ENCODE measurements at regions of chr2 and their contacts with region 1.

Region 1: DNA sequence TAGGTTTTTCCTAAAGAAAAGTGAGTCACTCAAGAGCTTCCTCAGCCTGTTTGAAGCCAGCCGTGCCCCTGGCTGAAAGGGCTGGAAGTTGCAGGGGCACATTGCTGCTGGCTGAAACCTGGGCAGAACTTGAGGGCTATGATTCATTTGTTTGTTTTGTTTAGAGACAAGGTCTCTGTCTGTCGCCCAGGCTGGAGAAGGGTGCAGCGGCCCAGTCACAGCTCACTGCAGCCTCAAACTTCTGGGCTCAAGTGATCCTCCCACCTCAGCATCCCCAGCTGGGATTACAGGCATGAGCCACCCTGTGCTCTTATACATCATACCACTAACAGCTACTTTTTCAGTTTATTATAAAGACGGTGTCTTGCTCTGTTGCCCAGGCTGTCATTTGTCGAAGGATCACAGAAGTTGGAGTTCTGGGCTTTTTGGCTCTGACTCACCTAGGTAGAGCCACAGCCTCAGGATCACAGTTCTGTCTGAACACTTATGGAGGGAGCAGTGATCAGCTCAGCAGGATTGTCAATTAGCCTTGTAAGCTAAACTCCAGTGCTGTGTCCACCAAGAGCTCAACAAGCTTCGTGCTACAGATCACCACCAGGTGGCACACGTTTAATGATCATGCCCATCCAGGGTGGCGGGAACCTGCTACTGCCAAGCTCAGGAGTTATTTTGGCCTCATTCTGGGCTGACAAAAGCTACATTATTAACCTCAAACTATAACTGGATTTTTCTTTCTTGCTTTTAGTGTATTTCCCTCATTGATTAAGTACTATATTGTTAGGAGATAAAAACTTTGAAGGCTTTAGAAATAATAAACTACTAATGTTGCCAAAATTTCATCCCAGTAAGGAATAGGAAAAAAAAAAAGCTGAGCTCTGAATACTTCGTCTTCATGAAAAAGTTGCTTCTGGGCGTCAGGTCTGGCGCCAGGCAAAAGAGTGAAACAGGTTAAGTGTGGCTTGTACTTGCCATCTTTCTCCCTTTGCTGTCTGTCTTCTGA is 57.9 kb downstream of the ARHGEF33 start:
- DNase-seq: peak; percentile 87
- H3K4me3 ChIP-seq: no peak overlapping the region
- H3K27ac ChIP-seq: no peak overlapping the region
- H3K4me1 ChIP-seq: peaks cover 9% of the 10 kb centered on the region
- H3K27me3 ChIP-seq: no peaks in the 10 kb centered on the region
- CTCF ChIP-seq: peak; percentile 77 to 83

Region 2: DNA sequence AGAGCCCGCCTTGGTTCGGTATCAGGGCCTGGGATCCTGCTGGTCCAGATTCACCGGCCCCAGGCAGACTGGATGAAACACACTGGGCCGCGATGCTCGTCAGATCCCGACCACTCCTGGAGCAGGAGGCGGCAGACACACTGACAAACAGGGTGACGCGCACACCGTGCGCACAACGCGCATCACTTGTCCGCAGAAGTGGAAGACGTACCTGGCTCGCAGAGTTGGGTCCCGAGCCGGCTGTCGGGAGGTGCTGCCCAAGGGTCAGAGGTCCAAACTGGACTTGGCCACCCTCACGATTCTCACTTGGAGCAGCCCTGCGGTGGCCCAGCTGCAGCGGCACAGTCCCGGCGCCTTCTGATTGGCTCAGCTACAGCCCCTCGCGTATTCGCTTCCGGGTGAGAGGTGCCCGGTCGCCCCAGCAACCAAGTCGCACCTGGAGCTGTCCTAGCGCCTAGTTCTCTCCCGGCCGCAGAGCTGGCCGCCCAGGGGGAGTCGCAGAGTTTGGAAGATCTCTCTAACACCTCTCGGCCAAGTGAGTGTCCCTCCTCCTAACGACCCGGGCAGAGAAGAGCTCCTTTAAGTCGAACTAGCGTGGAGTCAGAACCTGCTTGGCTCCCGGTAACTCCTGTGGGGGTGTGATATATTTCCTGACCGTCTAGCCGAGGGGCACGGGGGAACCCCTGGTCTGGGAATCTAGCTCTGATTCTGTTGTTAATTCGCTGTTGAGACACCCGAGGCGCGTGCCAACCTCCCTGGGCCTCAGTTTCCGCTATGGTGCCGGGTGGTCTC is 71.8 kb before region 1 on chr2 and contains the starts of genes DHX57 and MORN2:
- CTCF ChIA-PET with region 1: no interaction called
- dilution Hi-C with region 1: no loop called
- in situ Hi-C with region 1: loop called in 1 of 2 experiments (anchors 5 kb)
- intact Hi-C with region 1: no loop called
- DNase-seq: peak; percentile 84
- H3K4me3 ChIP-seq: peak within 1 kb of the TSS; percentile 70 to 90 (median 78)
- H3K27ac ChIP-seq: peak within 1 kb of the TSS; percentile 82
- H3K4me1 ChIP-seq: peaks cover 11% of the 10 kb centered on the region
- H3K27me3 ChIP-seq: no peaks in the 10 kb centered on the region
- CTCF ChIP-seq: no peak
- total RNA-seq, gene DHX57: 21.7 to 30.8 TPM
- total RNA-seq, gene MORN2: 9.2 to 16.3 TPM

Region 3: DNA sequence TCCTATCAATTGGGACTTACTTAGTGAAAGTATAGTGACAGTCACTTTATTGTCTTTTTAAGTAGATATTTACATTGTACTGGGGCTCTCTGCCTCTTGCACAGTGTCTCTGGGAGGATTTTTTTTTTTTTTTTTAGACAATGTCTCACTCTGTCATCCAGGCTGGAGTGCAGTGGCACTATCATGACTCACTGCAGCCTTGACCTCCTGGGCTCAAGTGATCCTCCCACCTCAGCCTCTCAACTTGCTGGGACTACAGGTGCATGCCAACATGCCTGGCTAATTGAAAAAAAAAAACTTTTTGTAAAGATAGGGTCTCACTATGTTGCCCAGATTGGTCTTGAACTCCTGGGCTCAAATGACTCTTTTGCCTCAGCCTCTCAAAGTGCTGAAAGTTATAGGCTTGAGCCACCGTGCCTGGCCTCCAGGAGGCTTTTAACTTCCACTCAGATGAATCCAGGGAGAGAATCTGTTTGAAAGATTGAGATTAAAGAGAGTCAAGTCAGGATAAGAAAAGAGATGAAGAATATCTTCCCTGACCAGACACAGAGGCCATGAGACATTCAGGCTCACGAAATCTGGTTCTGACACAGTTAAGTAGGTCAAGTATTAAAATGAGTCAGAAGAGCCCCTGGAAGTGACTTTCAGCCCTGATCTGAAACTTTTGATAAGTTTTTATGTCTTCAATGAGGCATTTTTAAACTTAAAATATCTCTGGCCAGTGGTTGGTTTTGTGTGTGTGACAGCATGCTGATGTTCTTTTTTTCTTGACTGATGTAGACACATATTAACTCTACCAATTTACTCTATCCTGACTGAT is 39.6 kb before region 1 on chr2:
- CTCF ChIA-PET with region 1: no interaction called
- dilution Hi-C with region 1: no loop called
- in situ Hi-C with region 1: no loop called
- intact Hi-C with region 1: no loop called
- DNase-seq: peak; percentile 12
- H3K4me3 ChIP-seq: no peak overlapping the region
- H3K27ac ChIP-seq: no peak overlapping the region
- H3K4me1 ChIP-seq: peaks cover 22% of the 10 kb centered on the region
- H3K27me3 ChIP-seq: no peaks in the 10 kb centered on the region
- CTCF ChIP-seq: no peak

Region 4: DNA sequence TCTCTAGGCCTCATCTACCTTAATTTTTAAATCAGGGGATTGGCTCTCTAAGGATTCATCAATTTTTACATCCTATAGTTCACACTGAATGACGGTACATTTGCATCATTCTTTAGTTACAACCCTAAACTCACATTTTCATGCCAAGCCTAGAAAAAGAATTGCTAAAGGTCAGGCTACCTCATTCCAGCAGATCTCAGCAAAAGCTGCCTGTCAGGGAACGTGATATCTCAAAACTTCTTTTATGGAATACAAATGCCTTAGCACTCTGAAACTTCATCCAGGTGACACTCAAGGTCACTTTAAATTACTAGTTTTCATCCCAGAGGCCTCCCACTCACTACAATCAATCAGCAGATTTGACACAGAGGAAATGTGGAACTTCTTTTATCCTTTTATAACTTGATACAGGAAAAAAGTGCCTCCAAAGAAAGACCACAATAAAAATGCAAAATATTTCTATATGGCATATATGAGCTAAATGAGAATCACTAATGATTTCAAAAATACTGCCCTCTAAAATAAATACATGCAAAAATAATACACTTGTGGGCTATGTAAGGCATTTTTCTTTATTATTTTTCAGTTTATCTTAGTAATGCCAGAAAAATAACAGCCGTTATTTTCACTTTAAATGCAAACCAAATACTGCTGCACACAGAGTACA is 33.6 kb after region 1 on chr2:
- CTCF ChIA-PET with region 1: no interaction called
- dilution Hi-C with region 1: no loop called
- in situ Hi-C with region 1: no loop called
- intact Hi-C with region 1: no loop called
- DNase-seq: no peak
- H3K4me3 ChIP-seq: no peak overlapping the region
- H3K27ac ChIP-seq: no peak overlapping the region
- H3K4me1 ChIP-seq: no peaks in the 10 kb centered on the region
- H3K27me3 ChIP-seq: no peaks in the 10 kb centered on the region
- CTCF ChIP-seq: no peak

Region 5: DNA sequence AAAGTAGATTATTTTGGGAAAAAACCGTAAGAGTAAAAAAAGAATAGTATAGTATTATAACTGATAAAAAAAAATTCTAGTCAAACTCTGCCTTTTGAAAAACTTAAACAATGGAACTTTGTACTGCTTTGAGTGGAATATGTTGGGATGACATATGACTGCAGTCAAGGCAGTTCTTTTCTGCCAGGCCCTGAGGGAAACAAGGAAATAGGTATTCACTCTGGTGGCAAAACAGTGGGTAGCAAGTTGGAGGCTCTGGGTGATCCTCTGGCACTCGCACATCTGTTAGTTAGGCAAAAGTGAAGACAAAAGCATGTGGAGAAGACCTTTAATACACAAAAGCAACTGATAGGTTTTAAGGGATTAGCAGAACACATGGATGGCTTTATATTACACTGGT is 44.4 kb after region 1 on chr2:
- CTCF ChIA-PET with region 1: no interaction called
- dilution Hi-C with region 1: no loop called
- in situ Hi-C with region 1: no loop called
- intact Hi-C with region 1: no loop called
- DNase-seq: no peak
- H3K4me3 ChIP-seq: no peak overlapping the region
- H3K27ac ChIP-seq: no peak overlapping the region
- H3K4me1 ChIP-seq: no peaks in the 10 kb centered on the region
- H3K27me3 ChIP-seq: no peaks in the 10 kb centered on the region
- CTCF ChIP-seq: no peak

Region 6: DNA sequence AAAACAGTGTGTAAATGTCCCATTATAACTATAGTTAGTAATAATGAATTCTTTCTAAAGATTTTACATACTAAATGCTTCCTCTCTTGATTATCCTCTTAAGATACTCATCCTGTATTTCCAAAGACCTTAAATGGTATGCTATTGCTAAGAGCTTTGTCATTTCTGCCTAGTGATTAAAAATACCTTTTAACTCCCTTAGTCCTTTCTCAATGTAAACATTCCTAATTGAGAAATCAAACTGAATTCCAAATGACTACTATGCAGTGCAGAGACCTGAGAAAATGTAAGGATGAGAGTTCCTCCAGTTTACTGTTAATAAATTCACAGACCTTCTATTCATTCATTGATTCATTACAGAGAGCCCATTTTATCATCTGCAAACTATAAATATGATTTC is 86.4 kb after region 1 on chr2:
- CTCF ChIA-PET with region 1: interaction called, 5 read pairs
- dilution Hi-C with region 1: no loop called
- in situ Hi-C with region 1: no loop called
- intact Hi-C with region 1: loop called (anchors 2 kb)
- DNase-seq: peak; percentile 23
- H3K4me3 ChIP-seq: no peak overlapping the region
- H3K27ac ChIP-seq: no peak overlapping the region
- H3K4me1 ChIP-seq: peaks cover 5% of the 10 kb centered on the region
- H3K27me3 ChIP-seq: no peaks in the 10 kb centered on the region
- CTCF ChIP-seq: no peak

Region 7: GRCh38 chr2:39059366-39059952 is 111.9 kb after region 1 on chr2:
- CTCF ChIA-PET with region 1: no interaction called
- dilution Hi-C with region 1: no loop called
- in situ Hi-C with region 1: no loop called
- intact Hi-C with region 1: loop called (anchors 1 kb)
- DNase-seq: peak; percentile 23
- H3K4me3 ChIP-seq: no peak overlapping the region
- H3K27ac ChIP-seq: no peak overlapping the region
- H3K4me1 ChIP-seq: no peaks in the 10 kb centered on the region
- H3K27me3 ChIP-seq: no peaks in the 10 kb centered on the region
- CTCF ChIP-seq: peak; percentile 61 to 64

Region 8: DNA sequence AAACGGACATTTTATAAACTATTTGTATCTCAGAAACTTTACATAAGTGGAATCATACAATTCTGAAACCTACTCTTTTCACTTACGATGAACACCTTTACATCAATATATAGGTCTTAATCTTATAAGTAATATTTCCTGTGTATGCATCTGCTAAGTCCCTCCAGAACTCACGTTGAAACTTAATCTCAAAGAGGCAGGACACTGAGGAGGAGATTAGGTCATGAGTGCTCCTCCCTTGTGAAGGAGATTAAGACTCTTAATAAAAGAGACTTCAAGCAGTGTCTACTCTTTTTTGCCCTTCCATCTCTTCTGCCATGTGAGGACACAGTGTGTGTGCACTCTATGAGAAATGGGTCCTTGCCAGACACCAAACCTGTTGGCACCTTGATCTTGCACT is 391.0 kb after region 1 on chr2:
- CTCF ChIA-PET with region 1: no interaction called
- dilution Hi-C with region 1: no loop called
- in situ Hi-C with region 1: no loop called
- intact Hi-C with region 1: no loop called
- DNase-seq: no peak
- H3K4me3 ChIP-seq: no peak overlapping the region
- H3K27ac ChIP-seq: no peak overlapping the region
- H3K4me1 ChIP-seq: no peaks in the 10 kb centered on the region
- H3K27me3 ChIP-seq: no peaks in the 10 kb centered on the region
- CTCF ChIP-seq: no peak